GM13976 (cell line): ENCODE measurements at regions of chr1 and their contacts with region 1.

Region 1: GRCh38 chr1:12201352-12202189 is 28.3 kb upstream of the VPS13D start:
- DNase-seq: no peak
- CTCF ChIP-seq: no peak

Region 2: DNA sequence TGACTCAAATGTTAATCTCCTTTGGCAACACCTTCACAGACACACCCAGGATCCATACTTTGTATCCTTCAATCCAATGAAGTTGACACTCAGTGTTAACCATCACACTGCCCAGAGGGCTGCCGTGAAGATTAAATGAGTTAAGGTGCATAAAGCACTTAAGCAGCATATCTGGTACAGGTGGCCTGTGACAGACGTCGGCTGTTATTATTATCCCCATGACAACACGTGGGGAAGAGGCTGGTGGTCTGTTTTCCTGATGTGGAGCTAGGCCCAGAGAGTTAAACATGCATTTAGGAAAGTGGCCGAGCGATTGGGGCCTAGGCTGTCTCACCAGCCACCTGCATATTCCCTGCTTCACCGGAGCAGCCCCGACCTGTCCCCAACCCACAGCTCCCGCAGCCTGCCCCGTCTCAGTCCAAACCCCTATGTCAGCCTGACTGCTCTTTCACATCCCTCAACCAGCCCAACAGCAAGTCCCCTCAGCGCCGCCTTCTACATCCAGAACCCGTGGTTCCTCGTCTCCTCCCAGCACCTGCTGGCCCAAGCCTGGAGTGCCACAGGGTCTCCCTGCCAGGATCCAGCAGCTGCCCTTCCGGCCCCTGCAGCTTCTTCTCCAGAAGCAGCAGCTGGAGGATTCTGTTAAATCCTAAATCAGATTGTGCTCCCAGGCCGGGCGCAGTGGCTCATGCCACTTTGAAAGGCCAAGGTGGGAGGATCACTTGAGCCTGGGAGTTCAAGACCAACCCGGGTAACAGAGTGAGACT is 625.3 kb before region 1 on chr1:
- in situ Hi-C with region 1: no loop called
- DNase-seq: no peak
- CTCF ChIP-seq: no peak

Region 3: GRCh38 chr1:12124693-12125421 is 76.7 kb before region 1 on chr1:
- in situ Hi-C with region 1: loop called (anchors 5 kb)
- DNase-seq: peak; percentile 77
- CTCF ChIP-seq: peak; percentile 84